A549 (cell line): ENCODE measurements at regions of chr17 and their contacts with region 1.

Region 1: DNA sequence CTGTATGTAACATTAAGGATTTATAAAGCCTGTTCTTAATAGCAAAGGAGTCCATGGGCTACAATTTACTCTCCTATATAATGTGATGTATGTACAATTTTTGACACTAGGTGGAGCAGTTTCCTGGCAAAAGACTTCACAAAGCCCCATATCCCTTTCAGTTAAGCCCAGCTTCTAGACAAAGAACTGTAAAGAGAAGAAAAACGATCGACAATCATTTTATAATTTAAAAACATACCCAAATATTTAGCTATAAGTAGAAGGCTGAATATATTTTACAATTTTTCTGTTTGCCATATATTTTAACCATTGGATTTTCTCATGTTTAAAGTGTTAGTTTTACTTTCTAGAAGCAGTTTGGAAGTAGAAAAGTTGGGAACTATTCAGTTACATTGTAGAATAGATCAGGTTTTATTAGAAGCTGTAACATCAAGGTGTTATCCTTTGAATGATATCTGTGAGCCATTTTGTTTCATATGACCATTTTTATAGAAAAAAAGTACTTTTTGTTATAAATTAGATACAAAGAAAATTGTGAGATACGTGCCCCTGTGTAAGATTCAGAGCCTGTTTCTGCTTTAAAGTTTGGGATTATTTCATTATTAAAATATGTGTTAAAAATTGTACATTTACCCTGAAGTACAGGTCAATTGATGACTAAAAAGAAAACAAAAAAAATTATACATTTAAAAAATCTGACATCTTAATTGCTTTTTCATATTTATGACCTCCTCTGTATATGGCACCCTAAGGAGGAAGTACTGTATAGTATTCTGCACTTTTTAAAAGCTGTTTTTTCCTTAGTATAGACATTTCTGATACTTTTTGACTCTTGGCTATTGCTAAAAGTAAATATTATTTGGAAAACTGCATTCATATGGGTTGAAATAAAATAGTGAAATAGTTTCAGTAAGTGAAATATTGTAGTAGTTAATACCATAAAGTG is 46.3 kb downstream of the VMP1 start:
- DNase-seq: peak; percentile 81 to 94
- ATAC-seq: peak; percentile 49 to 65
- H3K4me3 ChIP-seq: no peak overlapping the region
- H3K27ac ChIP-seq: peak overlapping the region; percentile 95
- H3K4me1 ChIP-seq: peaks cover 92% of the 10 kb centered on the region
- CTCF ChIP-seq: peak; percentile 98
- EP300 ChIP-seq: no peak
- POLR2A ChIP-seq: no peak
- RAD21 ChIP-seq: peak; percentile 97 to 98

Region 2: GRCh38 chr17:59490216-59490615 is 263.6 kb before region 1 on chr17:
- CTCF ChIA-PET with region 1: no interaction called
- POLR2A ChIA-PET with region 1: no interaction called
- DNase-seq: no peak
- ATAC-seq: no peak
- H3K4me3 ChIP-seq: no peak overlapping the region
- H3K27ac ChIP-seq: no peak overlapping the region
- H3K4me1 ChIP-seq: no peaks in the 10 kb centered on the region
- CTCF ChIP-seq: no peak
- EP300 ChIP-seq: no peak
- POLR2A ChIP-seq: no peak
- RAD21 ChIP-seq: no peak

Region 3: DNA sequence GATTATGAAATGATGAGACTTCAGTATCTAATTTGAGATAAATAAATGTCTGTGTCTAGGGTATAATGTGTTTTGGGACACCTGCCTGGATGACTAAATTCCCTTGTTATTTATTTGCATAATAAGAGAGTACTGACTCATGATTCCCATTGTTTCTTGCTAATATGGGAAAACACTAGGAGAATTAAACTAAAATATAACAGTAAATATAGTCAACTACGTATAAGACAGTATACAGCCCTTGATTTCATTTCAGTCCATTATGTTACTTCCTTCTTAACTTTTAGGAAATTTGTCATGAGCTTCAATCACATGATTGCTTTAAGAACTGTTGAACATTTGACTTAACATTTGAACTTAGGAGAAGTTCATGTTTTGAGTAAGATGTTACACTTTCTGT is 16.1 kb after region 1 on chr17:
- CTCF ChIA-PET with region 1: interaction called, 13 read pairs
- POLR2A ChIA-PET with region 1: interaction called, 3 read pairs
- DNase-seq: no peak
- ATAC-seq: no peak
- H3K4me3 ChIP-seq: no peak overlapping the region
- H3K27ac ChIP-seq: peak overlapping the region; percentile 71 to 76; a peak in 4 of 6 replicates
- H3K4me1 ChIP-seq: peaks cover 53% of the 10 kb centered on the region
- CTCF ChIP-seq: no peak
- EP300 ChIP-seq: no peak
- POLR2A ChIP-seq: no peak
- RAD21 ChIP-seq: no peak

Region 4: GRCh38 chr17:59804901-59805465 is 51.2 kb after region 1 on chr17:
- CTCF ChIA-PET with region 1: interaction called, 10 read pairs
- POLR2A ChIA-PET with region 1: interaction called, 15 read pairs
- DNase-seq: peak in 1 of 2 experiments; percentile 89
- ATAC-seq: peak in 1 of 2 experiments; percentile 29; a peak in 3 of 6 replicates
- H3K4me3 ChIP-seq: peak overlapping the region; percentile 4; the same call in 1 of the 3 replicates
- H3K27ac ChIP-seq: peak overlapping the region; percentile 90 to 92
- H3K4me1 ChIP-seq: peaks cover 85% of the 10 kb centered on the region
- CTCF ChIP-seq: no peak
- EP300 ChIP-seq: no peak
- POLR2A ChIP-seq: no peak
- RAD21 ChIP-seq: no peak

Region 5: GRCh38 chr17:59859444-59860025 is 105.7 kb after region 1 on chr17:
- CTCF ChIA-PET with region 1: interaction called, 4 read pairs
- POLR2A ChIA-PET with region 1: interaction called, 18 read pairs
- DNase-seq: peak in 1 of 2 experiments; percentile 83
- ATAC-seq: 0 out of 6 replicates have a peak, but pooled peaks of 1 of the 2 experiments have one; percentile 41
- H3K4me3 ChIP-seq: no peak overlapping the region
- H3K27ac ChIP-seq: peak overlapping the region; percentile 91 to 96
- H3K4me1 ChIP-seq: peaks cover 51% of the 10 kb centered on the region
- CTCF ChIP-seq: peak; percentile 90
- EP300 ChIP-seq: no peak
- POLR2A ChIP-seq: no peak
- RAD21 ChIP-seq: peak; percentile 92 to 95